GM12878 (cell line): ENCODE measurements at regions of chr9 and their contacts with region 1.

Region 1: DNA sequence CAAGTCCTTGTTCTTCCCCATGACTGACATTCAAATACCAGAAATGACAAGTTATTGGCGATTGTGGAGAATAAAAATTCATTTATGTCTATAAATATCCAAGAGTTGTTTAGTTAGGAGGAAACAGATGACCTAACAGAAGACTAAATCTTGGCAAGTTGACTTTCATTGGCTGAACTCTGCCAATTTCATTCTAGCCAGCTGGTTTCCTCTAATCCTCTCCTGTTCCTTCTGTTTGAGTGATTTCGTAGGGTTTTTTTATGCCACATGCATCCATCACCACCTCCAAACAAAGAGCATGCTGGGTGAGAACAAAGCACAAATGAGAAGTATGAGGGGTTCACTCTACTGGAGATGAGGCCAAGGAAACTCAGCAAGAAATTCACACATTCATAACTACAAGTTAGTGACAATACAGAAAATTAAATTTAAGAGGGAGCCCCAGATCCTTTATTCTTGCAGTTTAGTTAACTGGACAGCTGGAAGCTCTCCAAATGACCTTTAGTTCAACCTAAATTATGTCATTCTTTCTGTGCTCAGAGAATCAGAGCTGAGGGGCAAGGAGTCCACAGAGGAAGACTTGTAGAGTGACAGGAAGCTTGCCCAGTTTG is 932.0 kb downstream of the TLE4 start:
- DNase-seq: no peak
- ATAC-seq: no peak
- H3K4me3 ChIP-seq: no peak overlapping the region
- H3K27ac ChIP-seq: no peak overlapping the region
- H3K4me1 ChIP-seq: no peaks in the 10 kb centered on the region
- H3K27me3 ChIP-seq: no peaks in the 10 kb centered on the region
- CTCF ChIP-seq: no peak
- EP300 ChIP-seq: no peak
- POLR2A ChIP-seq: no peak
- RAD21 ChIP-seq: no peak

Region 2: DNA sequence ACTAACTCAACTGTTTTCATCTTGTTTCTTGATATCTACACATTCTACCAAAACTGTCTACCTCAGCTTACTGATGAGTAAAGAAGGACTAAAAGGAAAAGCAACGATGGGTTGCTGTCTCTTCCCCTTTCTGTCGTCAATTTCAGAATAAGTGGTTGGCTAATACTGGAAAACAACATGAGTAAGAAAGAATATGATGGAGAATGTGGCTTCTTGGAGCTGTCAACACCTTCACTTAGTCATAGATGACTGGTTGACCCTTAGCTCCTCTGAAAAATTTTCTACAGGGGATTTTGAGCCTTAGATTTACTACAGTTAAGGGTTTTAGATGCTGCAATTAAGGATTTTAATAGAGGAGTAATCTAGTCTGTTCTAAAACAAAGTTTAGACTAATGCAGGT is 134.1 kb before region 1 on chr9:
- CTCF ChIA-PET with region 1: no interaction called
- POLR2A ChIA-PET with region 1: no interaction called
- RAD21 ChIA-PET with region 1: no interaction called
- SMC1A ChIA-PET with region 1: no interaction called
- in situ Hi-C with region 1: no loop called
- intact Hi-C with region 1: no loop called
- DNase-seq: no peak
- ATAC-seq: no peak
- H3K4me3 ChIP-seq: no peak overlapping the region
- H3K27ac ChIP-seq: no peak overlapping the region
- H3K4me1 ChIP-seq: no peaks in the 10 kb centered on the region
- H3K27me3 ChIP-seq: no peaks in the 10 kb centered on the region
- CTCF ChIP-seq: no peak
- EP300 ChIP-seq: no peak
- POLR2A ChIP-seq: no peak
- RAD21 ChIP-seq: no peak

Region 3: DNA sequence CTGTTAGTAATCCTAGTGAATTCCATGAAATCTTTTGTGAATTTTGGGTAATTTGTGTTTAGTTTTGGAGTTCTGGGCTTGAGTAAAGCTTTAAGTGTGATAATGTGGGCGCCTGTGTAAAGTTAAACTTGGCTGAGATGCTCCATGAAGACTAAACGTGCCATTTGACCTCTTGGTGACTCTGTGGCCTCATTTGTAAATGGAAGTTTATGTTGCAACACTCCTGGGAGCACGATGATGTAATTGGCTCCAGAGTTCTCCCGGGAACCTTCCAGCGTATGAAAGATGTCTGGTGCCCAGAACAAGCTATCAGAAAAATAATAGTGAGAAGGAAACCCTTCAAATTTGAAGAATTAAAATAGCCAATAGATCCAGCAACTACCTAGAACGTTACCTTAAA is 49.2 kb after region 1 on chr9:
- CTCF ChIA-PET with region 1: no interaction called
- POLR2A ChIA-PET with region 1: no interaction called
- RAD21 ChIA-PET with region 1: no interaction called
- SMC1A ChIA-PET with region 1: no interaction called
- in situ Hi-C with region 1: no loop called
- intact Hi-C with region 1: loop called (anchors 10 kb)
- DNase-seq: no peak
- ATAC-seq: no peak
- H3K4me3 ChIP-seq: no peak overlapping the region
- H3K27ac ChIP-seq: no peak overlapping the region
- H3K4me1 ChIP-seq: no peaks in the 10 kb centered on the region
- H3K27me3 ChIP-seq: no peaks in the 10 kb centered on the region
- CTCF ChIP-seq: no peak
- EP300 ChIP-seq: no peak
- POLR2A ChIP-seq: no peak
- RAD21 ChIP-seq: no peak

Region 4: GRCh38 chr9:80899208-80899607 is 395.4 kb after region 1 on chr9:
- CTCF ChIA-PET with region 1: no interaction called
- POLR2A ChIA-PET with region 1: no interaction called
- RAD21 ChIA-PET with region 1: no interaction called
- SMC1A ChIA-PET with region 1: no interaction called
- in situ Hi-C with region 1: no loop called
- intact Hi-C with region 1: no loop called
- DNase-seq: no peak
- ATAC-seq: no peak
- H3K4me3 ChIP-seq: no peak overlapping the region
- H3K27ac ChIP-seq: no peak overlapping the region
- H3K4me1 ChIP-seq: no peaks in the 10 kb centered on the region
- H3K27me3 ChIP-seq: no peaks in the 10 kb centered on the region
- CTCF ChIP-seq: no peak
- EP300 ChIP-seq: no peak
- POLR2A ChIP-seq: no peak
- RAD21 ChIP-seq: no peak